ENCODE measurements at regions of chrX and their contacts with region 1.

Region 1: GRCh38 chrX:12814420-12814819 is 23.2 kb downstream of the PRPS2 start:
- DNase-seq: peak; percentile 30 to 59
- ATAC-seq: peak; percentile 71 to 82; a peak in 4 of 6 replicates
- H3K4me3 ChIP-seq: no peak overlapping the region
- H3K27ac ChIP-seq: no peak overlapping the region
- H3K4me1 ChIP-seq: no peaks in the 10 kb centered on the region
- CTCF ChIP-seq: peak; percentile 76
- EP300 ChIP-seq: no peak
- POLR2A ChIP-seq: no peak
- RAD21 ChIP-seq: peak; percentile 79

Region 2: GRCh38 chrX:12771445-12772069 is 42.9 kb before region 1 on chrX:
- CTCF ChIA-PET with region 1: no interaction called
- POLR2A ChIA-PET with region 1: no interaction called
- DNase-seq: peak; percentile 27 to 73
- ATAC-seq: peak; percentile 97 to 99
- H3K4me3 ChIP-seq: 0 out of 3 replicates have a peak overlapping the region, but pooled peaks have one; percentile 2
- H3K27ac ChIP-seq: no peak overlapping the region
- H3K4me1 ChIP-seq: no peaks in the 10 kb centered on the region
- CTCF ChIP-seq: peak; percentile 70
- EP300 ChIP-seq: no peak
- POLR2A ChIP-seq: no peak
- RAD21 ChIP-seq: peak in 1 of 2 experiments; percentile 39; a peak in 2 of 5 replicates

Region 3: GRCh38 chrX:12903646-12904045 is 89.2 kb after region 1 on chrX:
- CTCF ChIA-PET with region 1: interaction called, 11 read pairs
- POLR2A ChIA-PET with region 1: no interaction called
- DNase-seq: no peak
- ATAC-seq: no peak
- H3K4me3 ChIP-seq: no peak overlapping the region
- H3K27ac ChIP-seq: no peak overlapping the region
- H3K4me1 ChIP-seq: no peaks in the 10 kb centered on the region
- CTCF ChIP-seq: no peak
- EP300 ChIP-seq: no peak
- POLR2A ChIP-seq: no peak
- RAD21 ChIP-seq: no peak

Region 4: DNA sequence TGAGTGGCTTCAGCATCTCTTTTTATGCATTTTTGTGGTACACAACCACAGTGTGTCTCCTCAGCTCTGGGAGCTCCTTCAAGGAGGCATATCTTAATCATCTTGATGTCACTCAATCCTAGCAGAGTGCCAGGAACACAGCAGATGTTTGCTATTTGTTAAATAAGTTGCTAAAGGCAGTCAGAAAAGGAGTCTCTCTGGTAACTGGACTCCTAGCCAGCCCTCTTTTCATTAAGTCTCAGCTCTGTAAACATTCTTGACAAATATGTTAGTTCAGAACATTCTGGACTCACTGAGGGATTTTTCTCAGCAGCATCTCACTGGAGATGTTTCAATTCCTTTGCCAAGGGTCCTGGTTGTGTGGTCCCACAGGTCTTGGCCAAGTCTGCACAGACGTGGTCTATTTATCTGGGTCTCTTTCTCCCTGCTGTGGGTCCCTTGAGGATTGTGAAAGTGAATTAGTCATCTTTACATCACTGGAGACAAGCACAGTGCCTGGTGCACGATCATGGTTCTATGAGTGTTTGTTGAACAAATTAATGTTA is 250.3 kb after region 1 on chrX:
- CTCF ChIA-PET with region 1: no interaction called
- POLR2A ChIA-PET with region 1: no interaction called
- DNase-seq: peak; percentile 8 to 79
- ATAC-seq: peak; percentile 43 to 80; a peak in 4 of 6 replicates
- H3K4me3 ChIP-seq: no peak overlapping the region
- H3K27ac ChIP-seq: peak overlapping the region; percentile 91 to 93
- H3K4me1 ChIP-seq: peaks cover 43% of the 10 kb centered on the region
- CTCF ChIP-seq: no peak
- EP300 ChIP-seq: peak; percentile 60 to 83; a peak in 3 of 5 replicates
- POLR2A ChIP-seq: no peak
- RAD21 ChIP-seq: peak; percentile 4 to 44; a peak in 4 of 5 replicates

Region 5: DNA sequence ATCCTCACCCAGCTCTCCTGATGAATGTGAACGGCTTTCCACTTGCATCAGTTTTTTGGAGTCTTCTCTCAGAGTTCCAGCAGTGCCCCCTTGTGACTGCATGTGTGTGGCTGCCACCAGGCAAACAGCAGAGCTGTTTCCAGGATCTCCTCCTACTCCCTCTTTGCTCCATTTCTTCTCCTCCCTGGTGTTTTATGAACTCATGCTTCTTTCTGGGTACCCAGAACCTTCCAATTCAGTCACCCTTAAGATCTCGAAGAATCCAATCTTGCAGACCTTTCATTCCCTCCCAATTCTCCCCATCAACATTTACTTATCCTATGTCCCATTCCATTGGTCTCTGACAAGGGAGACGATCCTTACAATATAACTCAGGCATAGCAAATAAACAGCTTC is 831.7 kb after region 1 on chrX:
- CTCF ChIA-PET with region 1: interaction called, 27 read pairs
- POLR2A ChIA-PET with region 1: no interaction called
- DNase-seq: peak; percentile 24 to 69
- ATAC-seq: peak; percentile 93 to 94
- H3K4me3 ChIP-seq: no peak overlapping the region
- H3K27ac ChIP-seq: peak overlapping the region; percentile 72 to 80
- H3K4me1 ChIP-seq: peaks cover 4% of the 10 kb centered on the region; the same call in 2 of the 3 replicates
- CTCF ChIP-seq: peak; percentile 68
- EP300 ChIP-seq: no peak
- POLR2A ChIP-seq: no peak
- RAD21 ChIP-seq: peak; percentile 75 to 81